ENCODE measurements at regions of chr21 and their contacts with region 1.

Region 1: DNA sequence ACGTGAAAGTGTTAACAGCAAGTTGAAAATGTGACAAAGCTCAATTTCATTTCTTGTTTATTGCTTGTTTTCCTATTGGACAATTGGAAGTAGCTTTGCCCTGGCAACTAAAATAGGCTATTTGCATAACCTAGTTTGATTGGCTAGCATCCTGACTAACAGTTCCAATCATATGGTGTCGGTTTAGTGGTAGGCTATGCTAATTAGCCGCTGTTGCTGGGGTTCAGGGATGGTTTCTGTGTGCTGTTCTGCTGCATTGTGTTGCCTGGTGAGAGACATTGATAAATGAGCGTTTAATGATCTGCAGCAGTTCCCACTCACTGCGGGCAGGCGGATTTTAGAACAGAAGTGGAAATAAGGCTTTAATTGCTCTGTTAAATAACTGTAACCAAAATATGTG is 68.5 kb downstream of the DYRK1A start:
- DNase-seq: peak in 8 of 9 experiments; percentile 12 to 89 (median 44)
- ATAC-seq: peak; percentile 99
- H3K4me3 ChIP-seq: no peak overlapping the region
- H3K4me3 Mint-ChIP-seq: no peak overlapping the region
- H3K27ac ChIP-seq: no peak overlapping the region
- H3K27ac Mint-ChIP-seq: no peak overlapping the region
- H3K4me1 ChIP-seq: peaks cover 67% of the 10 kb centered on the region
- H3K4me1 Mint-ChIP-seq: peaks cover 42% of the 10 kb centered on the region
- H3K27me3 ChIP-seq: no peaks in the 10 kb centered on the region
- H3K27me3 Mint-ChIP-seq: no peaks in the 10 kb centered on the region
- CTCF ChIP-seq: no peak

Region 2: GRCh38 chr21:37146320-37147235 is 288.5 kb before region 1 on chr21:
- CTCF ChIA-PET with region 1: no interaction called
- POLR2A ChIA-PET with region 1: no interaction called
- intact Hi-C with region 1: no loop called
- DNase-seq: no peak
- ATAC-seq: no peak
- H3K4me3 ChIP-seq: no peak overlapping the region
- H3K4me3 Mint-ChIP-seq: no peak overlapping the region
- H3K27ac ChIP-seq: no peak overlapping the region
- H3K27ac Mint-ChIP-seq: peak overlapping the region; percentile 0
- H3K4me1 ChIP-seq: no peaks in the 10 kb centered on the region
- H3K4me1 Mint-ChIP-seq: no peaks in the 10 kb centered on the region
- H3K27me3 ChIP-seq: no peaks in the 10 kb centered on the region
- H3K27me3 Mint-ChIP-seq: no peaks in the 10 kb centered on the region
- CTCF ChIP-seq: no peak

Region 3: DNA sequence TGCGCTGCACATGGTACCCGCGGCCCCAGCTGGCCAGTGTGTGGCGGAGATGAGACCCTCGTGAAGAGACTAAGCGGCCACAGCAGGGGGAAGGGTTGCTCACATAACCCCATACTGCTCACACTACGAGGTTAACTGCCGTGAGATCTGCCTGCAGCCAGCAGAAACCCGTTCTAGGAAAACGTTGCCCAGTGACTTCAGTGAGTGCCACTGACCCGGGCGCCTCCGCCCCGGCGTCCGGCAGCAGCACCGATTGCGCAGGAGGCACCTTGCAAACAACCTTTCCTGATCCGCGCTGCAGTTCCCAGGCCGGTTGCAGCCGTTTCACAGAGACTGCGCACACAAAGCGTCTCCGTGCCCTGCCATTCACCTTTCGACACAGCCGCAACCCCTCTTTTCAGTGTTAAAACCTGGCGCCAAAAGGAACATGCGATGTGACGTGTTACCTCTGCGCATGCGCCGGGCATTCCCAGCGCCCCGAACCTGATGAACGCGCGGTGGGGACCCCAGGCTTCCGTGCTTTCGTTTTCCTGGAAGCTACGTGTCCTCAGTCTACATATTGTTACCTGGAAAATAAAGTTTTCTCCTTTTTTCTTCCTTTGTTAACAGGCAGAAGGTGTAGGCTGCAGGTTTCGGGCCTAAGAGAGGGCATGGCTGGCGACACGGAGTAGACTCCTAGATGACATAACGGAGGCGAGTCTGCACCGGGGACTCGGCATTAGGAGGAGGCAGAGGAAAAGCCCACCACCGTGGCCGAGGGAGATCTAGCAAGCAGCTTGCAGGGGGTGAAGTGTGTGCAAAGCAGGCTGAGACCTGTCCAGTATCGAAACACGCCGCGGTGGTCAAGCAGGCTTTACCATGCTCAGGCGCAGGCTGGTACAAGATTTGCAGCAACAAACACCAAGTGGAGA is 176.9 kb before region 1 on chr21:
- CTCF ChIA-PET with region 1: no interaction called
- POLR2A ChIA-PET with region 1: no interaction called
- intact Hi-C with region 1: loop called (anchors 5 kb)
- DNase-seq: peak; percentile 51 to 94 (median 78)
- ATAC-seq: peak; percentile 77
- H3K4me3 ChIP-seq: peak overlapping the region; percentile 71 to 87
- H3K4me3 Mint-ChIP-seq: peak overlapping the region; percentile 83
- H3K27ac ChIP-seq: peak overlapping the region; percentile 71 to 76
- H3K27ac Mint-ChIP-seq: peak overlapping the region; percentile 93
- H3K4me1 ChIP-seq: peaks cover 17% of the 10 kb centered on the region
- H3K4me1 Mint-ChIP-seq: peaks cover 36% of the 10 kb centered on the region
- H3K27me3 ChIP-seq: no peaks in the 10 kb centered on the region
- H3K27me3 Mint-ChIP-seq: no peaks in the 10 kb centered on the region
- CTCF ChIP-seq: no peak

Region 4: DNA sequence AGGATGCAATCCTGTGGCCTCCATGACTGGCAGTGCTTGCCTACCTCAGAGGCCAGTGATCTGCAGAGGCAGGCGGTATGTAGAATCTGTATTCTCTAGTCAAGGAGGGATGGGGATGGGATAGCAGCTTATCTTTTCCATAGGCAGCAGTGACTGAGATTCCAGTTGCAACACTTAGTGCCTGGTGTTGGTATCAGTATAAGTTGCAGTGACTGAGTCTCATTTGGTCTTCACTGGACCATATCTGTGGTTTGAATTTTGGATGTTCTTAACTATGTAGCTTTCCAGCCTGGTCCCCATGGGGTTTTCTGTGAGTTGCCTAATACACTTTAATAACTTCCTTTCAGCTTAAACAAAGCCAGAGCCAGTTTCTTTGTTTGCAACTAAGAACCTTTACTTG is 52.0 kb before region 1 on chr21:
- CTCF ChIA-PET with region 1: no interaction called
- POLR2A ChIA-PET with region 1: no interaction called
- intact Hi-C with region 1: loop called in 1 of 2 experiments (anchors 2 kb)
- DNase-seq: no peak
- ATAC-seq: no peak
- H3K4me3 ChIP-seq: no peak overlapping the region
- H3K4me3 Mint-ChIP-seq: peak overlapping the region; percentile 23
- H3K27ac ChIP-seq: no peak overlapping the region
- H3K27ac Mint-ChIP-seq: no peak overlapping the region
- H3K4me1 ChIP-seq: peaks cover 87% of the 10 kb centered on the region
- H3K4me1 Mint-ChIP-seq: peaks cover 92% of the 10 kb centered on the region
- H3K27me3 ChIP-seq: no peaks in the 10 kb centered on the region
- H3K27me3 Mint-ChIP-seq: no peaks in the 10 kb centered on the region
- CTCF ChIP-seq: no peak

Region 5: GRCh38 chr21:37398697-37399096 is 36.4 kb before region 1 on chr21:
- CTCF ChIA-PET with region 1: no interaction called
- POLR2A ChIA-PET with region 1: no interaction called
- intact Hi-C with region 1: loop called in 1 of 2 experiments (anchors 5 kb)
- DNase-seq: peak in 3 of 9 experiments; percentile 32 to 53 (median 41)
- ATAC-seq: peak; percentile 82
- H3K4me3 ChIP-seq: no peak overlapping the region
- H3K4me3 Mint-ChIP-seq: peak overlapping the region; percentile 27
- H3K27ac ChIP-seq: no peak overlapping the region
- H3K27ac Mint-ChIP-seq: peak overlapping the region; percentile 55
- H3K4me1 ChIP-seq: peaks cover 53% of the 10 kb centered on the region
- H3K4me1 Mint-ChIP-seq: peaks cover 88% of the 10 kb centered on the region
- H3K27me3 ChIP-seq: no peaks in the 10 kb centered on the region
- H3K27me3 Mint-ChIP-seq: no peaks in the 10 kb centered on the region
- CTCF ChIP-seq: no peak

Region 6: DNA sequence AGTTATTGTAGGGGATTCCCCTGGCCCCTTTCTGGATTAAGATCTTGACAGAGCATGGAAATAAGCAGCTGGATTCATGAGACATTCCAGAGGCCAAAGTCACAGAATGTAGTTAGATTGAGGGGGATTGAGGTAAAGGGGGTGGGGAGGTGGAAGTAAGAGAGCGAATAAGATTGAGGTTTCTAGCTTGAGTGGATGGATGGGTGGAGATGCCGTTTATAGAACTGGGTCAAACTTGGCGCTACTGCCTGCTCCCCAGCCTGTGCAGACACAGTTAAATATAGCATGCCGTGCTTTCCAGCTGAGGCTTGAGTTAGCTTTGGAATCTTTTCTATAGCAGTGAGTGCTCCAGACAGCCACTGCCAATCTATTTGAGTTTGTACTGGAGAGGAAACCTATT is 17.1 kb after region 1 on chr21:
- CTCF ChIA-PET with region 1: no interaction called
- POLR2A ChIA-PET with region 1: no interaction called
- intact Hi-C with region 1: loop called in 1 of 2 experiments (anchors 2 kb)
- DNase-seq: no peak
- ATAC-seq: no peak
- H3K4me3 ChIP-seq: no peak overlapping the region
- H3K4me3 Mint-ChIP-seq: no peak overlapping the region
- H3K27ac ChIP-seq: no peak overlapping the region
- H3K27ac Mint-ChIP-seq: peak overlapping the region; percentile 47
- H3K4me1 ChIP-seq: peaks cover 47% of the 10 kb centered on the region
- H3K4me1 Mint-ChIP-seq: peaks cover 86% of the 10 kb centered on the region
- H3K27me3 ChIP-seq: no peaks in the 10 kb centered on the region
- H3K27me3 Mint-ChIP-seq: no peaks in the 10 kb centered on the region
- CTCF ChIP-seq: no peak

Region 7: DNA sequence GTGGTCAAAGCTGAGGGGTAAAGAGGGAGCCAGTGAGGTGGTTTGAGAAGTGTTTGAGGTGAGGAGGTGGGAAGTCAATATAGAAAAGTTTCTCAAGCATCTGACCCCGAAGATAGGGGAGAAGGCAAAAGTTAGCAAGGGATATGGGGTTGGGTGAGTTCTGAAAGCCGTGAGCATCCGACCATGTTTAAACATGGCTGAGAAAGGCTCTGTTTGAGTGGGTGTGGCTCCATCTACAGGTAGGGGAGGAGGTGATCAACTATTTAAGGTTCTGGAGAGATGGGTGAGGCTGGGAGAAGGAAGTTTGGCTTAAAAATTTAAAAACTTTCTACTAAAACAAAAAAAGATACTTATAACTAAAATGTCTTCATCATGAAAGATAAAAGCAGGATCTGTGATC is 207.4 kb after region 1 on chr21:
- CTCF ChIA-PET with region 1: no interaction called
- POLR2A ChIA-PET with region 1: no interaction called
- intact Hi-C with region 1: no loop called
- DNase-seq: peak in 6 of 9 experiments; percentile 3 to 56 (median 31)
- ATAC-seq: peak; percentile 49
- H3K4me3 ChIP-seq: no peak overlapping the region
- H3K4me3 Mint-ChIP-seq: no peak overlapping the region
- H3K27ac ChIP-seq: no peak overlapping the region
- H3K27ac Mint-ChIP-seq: no peak overlapping the region
- H3K4me1 ChIP-seq: no peaks in the 10 kb centered on the region
- H3K4me1 Mint-ChIP-seq: no peaks in the 10 kb centered on the region
- H3K27me3 ChIP-seq: no peaks in the 10 kb centered on the region
- H3K27me3 Mint-ChIP-seq: peaks cover 47% of the 10 kb centered on the region
- CTCF ChIP-seq: peak; percentile 22